ENCODE measurements at regions of chr12 and their contacts with region 1.

Region 1: GRCh38 chr12:34218165-34219045 is 196.1 kb downstream of the ALG10 start:
- DNase-seq: peak in 4 of 5 donors; percentile 18 to 82 (median 74)
- H3K4me3 ChIP-seq: peak overlapping the region in 2 of 3 donors; percentile 59 to 63
- H3K27ac ChIP-seq: no peak overlapping the region
- H3K4me1 ChIP-seq: no peaks in the 10 kb centered on the region
- H3K27me3 ChIP-seq: no peaks in the 10 kb centered on the region
- CTCF ChIP-seq: peak; percentile 91

Region 2: GRCh38 chr12:34121360-34121759 is 97.0 kb before region 1 on chr12:
- intact Hi-C with region 1: loop called (anchors 5 kb)
- DNase-seq: no peak
- H3K4me3 ChIP-seq: no peak overlapping the region
- H3K27ac ChIP-seq: no peak overlapping the region
- H3K4me1 ChIP-seq: no peaks in the 10 kb centered on the region
- H3K27me3 ChIP-seq: no peaks in the 10 kb centered on the region
- CTCF ChIP-seq: no peak